MCF 10A (cell line): ENCODE measurements at regions of chr1 and their contacts with region 1.

Region 1: GRCh38 chr1:226121587-226122400 is 59.3 kb downstream of the H3-3A start:
- DNase-seq: peak; percentile 72
- H3K4me3 Mint-ChIP-seq: peak overlapping the region; percentile 65
- H3K27ac Mint-ChIP-seq: no peak overlapping the region
- H3K4me1 Mint-ChIP-seq: peaks cover 29% of the 10 kb centered on the region
- H3K27me3 Mint-ChIP-seq: no peaks in the 10 kb centered on the region
- CTCF ChIP-seq: peak; percentile 99

Region 2: DNA sequence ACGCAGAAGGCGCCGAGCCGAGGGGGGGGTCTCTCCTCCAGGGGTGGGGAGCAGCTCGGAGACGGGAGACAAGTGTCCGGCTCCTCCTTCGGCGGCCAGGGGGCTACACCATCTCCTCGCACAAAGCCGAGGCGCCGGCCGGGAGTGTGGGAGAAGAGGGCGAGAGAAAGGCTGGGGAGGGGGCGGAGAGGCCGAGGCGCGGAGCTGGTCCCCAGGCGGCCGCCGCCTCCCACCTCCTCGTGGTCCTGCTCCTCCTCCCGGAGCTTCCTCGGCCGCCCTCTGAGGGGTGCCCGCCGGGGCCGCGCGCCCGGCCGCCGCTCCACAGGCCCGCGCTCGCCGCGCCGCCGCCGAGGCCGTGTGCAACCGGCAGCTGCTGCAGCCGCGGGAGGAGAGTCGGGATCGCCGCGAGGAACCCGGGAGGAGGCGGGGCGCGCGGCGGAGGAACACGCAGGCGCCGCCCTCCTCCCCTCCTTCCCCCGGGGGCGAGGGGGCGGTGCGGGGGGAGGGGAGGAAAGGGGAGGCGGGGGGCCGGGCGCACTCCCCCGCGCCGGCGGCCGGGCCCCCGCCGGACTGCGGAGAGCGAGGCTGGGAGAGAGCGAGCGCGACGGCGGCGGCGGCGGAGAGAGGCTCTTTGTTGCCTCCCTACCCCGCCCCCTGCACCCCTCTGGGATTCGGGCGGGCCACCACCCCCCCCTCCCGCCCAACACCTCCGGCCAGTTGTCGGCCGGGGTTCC is 468.9 kb before region 1 on chr1 and contains the start of gene ENAH:
- CTCF ChIA-PET with region 1: no interaction called
- POLR2A ChIA-PET with region 1: no interaction called
- intact Hi-C with region 1: no loop called
- DNase-seq: peak; percentile 93
- H3K4me3 Mint-ChIP-seq: peak within 1 kb of the TSS; percentile 99
- H3K27ac Mint-ChIP-seq: peak within 1 kb of the TSS; percentile 94
- H3K4me1 Mint-ChIP-seq: peaks cover 67% of the 10 kb centered on the region
- H3K27me3 Mint-ChIP-seq: no peaks in the 10 kb centered on the region
- CTCF ChIP-seq: no peak
- total RNA-seq, gene ENAH: 346 and 420 TPM in 2 replicates

Region 3: DNA sequence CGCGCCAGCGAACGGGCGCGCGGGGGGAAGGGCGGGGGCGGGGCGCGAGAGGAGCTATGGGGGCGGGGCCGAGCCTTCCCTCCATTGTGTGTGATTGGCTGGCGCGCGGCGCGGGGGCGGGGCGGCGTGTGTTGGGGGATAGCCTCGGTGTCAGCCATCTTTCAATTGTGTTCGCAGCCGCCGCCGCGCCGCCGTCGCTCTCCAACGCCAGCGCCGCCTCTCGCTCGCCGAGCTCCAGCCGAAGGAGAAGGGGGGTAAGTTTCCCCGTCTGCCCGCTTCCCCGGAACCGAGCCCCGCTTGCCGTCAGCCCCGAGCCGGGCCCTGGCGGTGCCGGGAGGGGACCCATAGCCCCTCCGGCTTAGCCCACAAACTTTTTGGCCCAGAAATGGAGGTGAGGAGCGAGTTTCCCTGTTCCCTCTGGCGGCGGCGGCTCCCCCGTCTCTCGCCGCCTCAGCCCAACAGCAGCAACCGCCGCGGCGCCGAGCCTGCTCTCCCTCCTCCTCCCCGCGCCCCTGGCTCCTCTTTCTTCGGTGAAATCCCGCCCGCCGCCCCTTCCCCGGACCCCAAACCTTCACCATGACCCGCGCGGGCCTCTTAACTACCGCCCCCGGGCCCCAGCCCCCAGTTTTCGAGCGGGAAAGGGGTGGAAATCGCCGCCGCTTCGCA is 59.1 kb before region 1 on chr1 and contains the start of gene H3-3A:
- CTCF ChIA-PET with region 1: interaction called, 134 read pairs
- POLR2A ChIA-PET with region 1: interaction called, 68 read pairs
- intact Hi-C with region 1: loop called (anchors 1 kb)
- DNase-seq: peak; percentile 100
- H3K4me3 Mint-ChIP-seq: peak within 1 kb of the TSS; percentile 100
- H3K27ac Mint-ChIP-seq: peak within 1 kb of the TSS; percentile 99
- H3K4me1 Mint-ChIP-seq: peaks cover 35% of the 10 kb centered on the region
- H3K27me3 Mint-ChIP-seq: no peaks in the 10 kb centered on the region
- CTCF ChIP-seq: no peak
- total RNA-seq, gene H3-3A: 635 and 710 TPM in 2 replicates

Region 4: DNA sequence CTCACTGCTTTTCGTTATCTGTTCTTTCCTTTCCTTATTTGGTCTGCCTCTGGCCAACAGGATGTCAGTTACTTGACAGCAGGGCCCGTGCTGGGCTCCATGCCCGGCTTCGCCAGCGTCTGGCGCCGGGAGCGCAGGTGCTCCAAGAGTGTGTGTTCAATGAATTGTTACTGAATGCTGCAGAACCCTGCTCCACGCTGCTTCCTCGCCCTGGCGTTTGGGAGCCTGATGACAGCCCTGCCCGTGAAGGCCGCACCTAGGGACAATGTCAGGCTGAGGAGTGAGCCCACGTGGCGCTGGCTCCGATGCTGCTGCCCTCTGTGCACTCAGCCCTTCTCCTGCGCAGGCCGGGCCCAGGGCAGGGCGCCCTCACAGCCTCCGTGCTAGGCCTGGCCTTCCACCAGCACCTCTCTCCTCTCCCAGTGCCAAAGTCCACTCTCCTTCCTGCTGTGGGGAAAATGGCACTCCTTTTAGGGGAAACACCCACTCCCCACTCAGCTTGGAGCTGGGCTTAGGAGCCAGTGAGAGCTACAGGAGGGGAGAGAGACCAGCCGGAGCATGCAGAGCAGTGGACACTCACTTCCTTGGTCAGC is 13.4 kb after region 1 on chr1:
- CTCF ChIA-PET with region 1: interaction called, 34 read pairs
- POLR2A ChIA-PET with region 1: interaction called, 4 read pairs
- intact Hi-C with region 1: no loop called
- DNase-seq: no peak
- H3K4me3 Mint-ChIP-seq: no peak overlapping the region
- H3K27ac Mint-ChIP-seq: peak overlapping the region; percentile 5
- H3K4me1 Mint-ChIP-seq: peaks cover 11% of the 10 kb centered on the region
- H3K27me3 Mint-ChIP-seq: no peaks in the 10 kb centered on the region
- CTCF ChIP-seq: no peak

Region 5: GRCh38 chr1:226186124-226187018 is 64.6 kb after region 1 on chr1 and contains the start of gene ACBD3:
- CTCF ChIA-PET with region 1: interaction called, 153 read pairs
- POLR2A ChIA-PET with region 1: interaction called, 56 read pairs
- intact Hi-C with region 1: no loop called
- DNase-seq: peak; percentile 91
- H3K4me3 Mint-ChIP-seq: peak within 1 kb of the TSS; percentile 93
- H3K27ac Mint-ChIP-seq: peak within 1 kb of the TSS; percentile 93
- H3K4me1 Mint-ChIP-seq: peaks cover 35% of the 10 kb centered on the region
- H3K27me3 Mint-ChIP-seq: no peaks in the 10 kb centered on the region
- CTCF ChIP-seq: no peak
- total RNA-seq, gene ACBD3: 93.9 and 122 TPM in 2 replicates

Region 6: DNA sequence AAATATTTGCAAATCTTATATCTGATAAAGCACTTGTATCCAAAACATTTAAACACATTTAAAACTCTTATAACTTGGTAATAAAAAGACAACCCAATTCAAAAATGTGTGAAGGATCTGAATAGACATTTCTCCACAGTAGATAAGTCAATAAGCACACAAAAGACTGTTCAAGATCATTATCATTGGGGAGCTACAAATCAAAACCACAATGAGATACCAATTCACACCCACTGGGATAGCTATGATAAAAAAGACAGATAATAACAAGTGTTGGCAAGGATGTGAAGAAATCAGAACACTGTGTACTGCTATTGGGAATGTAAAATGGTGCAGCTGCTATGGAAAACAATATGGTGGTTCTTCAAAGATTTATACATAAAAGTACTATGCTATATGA is 192.3 kb after region 1 on chr1:
- CTCF ChIA-PET with region 1: interaction called, 13 read pairs
- POLR2A ChIA-PET with region 1: interaction called, 27 read pairs
- intact Hi-C with region 1: no loop called
- DNase-seq: no peak
- H3K4me3 Mint-ChIP-seq: no peak overlapping the region
- H3K27ac Mint-ChIP-seq: no peak overlapping the region
- H3K4me1 Mint-ChIP-seq: peaks cover 17% of the 10 kb centered on the region
- H3K27me3 Mint-ChIP-seq: no peaks in the 10 kb centered on the region
- CTCF ChIP-seq: no peak

Region 7: DNA sequence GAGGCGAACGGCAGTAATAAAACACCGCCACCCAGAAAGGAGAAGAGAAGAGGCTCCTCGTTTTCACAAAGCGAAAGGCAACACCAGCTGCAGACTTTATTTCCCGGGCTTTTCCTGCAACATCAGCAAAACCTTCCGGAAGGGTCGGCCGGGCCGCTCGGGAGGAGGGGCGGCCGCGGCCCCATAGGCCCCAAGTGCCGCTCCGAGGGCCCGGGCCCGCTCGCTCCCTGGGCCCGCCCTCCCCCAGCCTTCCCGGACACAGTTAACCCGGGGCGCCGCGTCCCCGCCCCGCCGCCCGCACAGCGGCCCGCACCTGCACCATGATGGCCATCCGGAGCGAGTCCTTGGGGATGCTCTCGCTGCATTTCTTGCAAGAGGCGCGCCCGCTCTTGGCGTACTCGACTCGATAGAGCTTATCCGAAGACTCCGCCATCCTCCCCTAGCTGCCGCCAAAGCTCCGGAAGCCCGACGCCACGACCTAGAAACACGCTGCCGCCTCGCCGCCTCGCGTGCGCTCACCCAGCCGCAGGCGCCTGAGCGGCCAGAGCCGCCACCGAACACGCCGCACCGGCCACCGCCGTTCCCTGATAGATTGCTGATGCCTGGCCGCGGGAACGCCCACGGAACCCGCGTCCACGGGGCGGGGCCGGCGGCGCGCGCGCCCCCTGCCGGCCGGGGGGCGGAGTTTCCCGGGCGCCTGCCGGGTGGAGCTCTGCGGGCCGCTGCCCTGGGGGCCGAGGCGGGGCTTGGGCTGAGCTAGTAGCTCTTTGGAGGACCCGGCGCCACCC is 285.9 kb after region 1 on chr1 and contains the start of gene PARP1:
- CTCF ChIA-PET with region 1: interaction called, 113 read pairs
- POLR2A ChIA-PET with region 1: interaction called, 68 read pairs
- intact Hi-C with region 1: no loop called
- DNase-seq: peak; percentile 98
- H3K4me3 Mint-ChIP-seq: peak within 1 kb of the TSS; percentile 78
- H3K27ac Mint-ChIP-seq: peak within 1 kb of the TSS; percentile 82
- H3K4me1 Mint-ChIP-seq: peaks cover 38% of the 10 kb centered on the region
- H3K27me3 Mint-ChIP-seq: no peaks in the 10 kb centered on the region
- CTCF ChIP-seq: peak; percentile 99
- total RNA-seq, gene PARP1: 192 and 235 TPM in 2 replicates